Ovary (tissue), 10 donors: ENCODE measurements at regions of chr9 and their contacts with region 1.

Region 1: DNA sequence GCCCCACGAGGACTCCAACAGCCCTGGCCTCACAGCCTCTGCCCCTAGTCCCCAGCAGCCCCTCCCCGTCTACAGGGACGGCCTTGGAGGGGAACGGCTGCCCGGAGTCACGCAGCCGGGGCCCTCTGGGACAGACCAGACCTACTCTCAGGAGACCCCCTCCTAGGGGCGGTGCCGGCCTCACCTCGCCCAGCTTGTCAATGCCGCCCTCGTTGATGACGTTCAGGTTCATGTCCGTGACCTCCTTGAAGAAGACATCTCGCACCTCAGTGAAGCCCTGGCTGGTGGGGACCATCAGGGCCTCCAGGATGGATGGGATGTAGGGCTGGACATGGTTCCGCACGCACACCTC is 58.6 kb downstream of the LRSAM1 start:
- DNase-seq: peak in 2 of 5 donors; percentile 41 to 61
- H3K4me3 ChIP-seq: no peak overlapping the region
- H3K27ac ChIP-seq: peak overlapping the region; percentile 59 to 85
- H3K4me1 ChIP-seq: peaks cover 7% of the 10 kb centered on the region
- H3K27me3 ChIP-seq: no peaks in the 10 kb centered on the region
- CTCF ChIP-seq: no peak
- EP300 ChIP-seq: no peak
- POLR2A ChIP-seq: no peak

Region 2: DNA sequence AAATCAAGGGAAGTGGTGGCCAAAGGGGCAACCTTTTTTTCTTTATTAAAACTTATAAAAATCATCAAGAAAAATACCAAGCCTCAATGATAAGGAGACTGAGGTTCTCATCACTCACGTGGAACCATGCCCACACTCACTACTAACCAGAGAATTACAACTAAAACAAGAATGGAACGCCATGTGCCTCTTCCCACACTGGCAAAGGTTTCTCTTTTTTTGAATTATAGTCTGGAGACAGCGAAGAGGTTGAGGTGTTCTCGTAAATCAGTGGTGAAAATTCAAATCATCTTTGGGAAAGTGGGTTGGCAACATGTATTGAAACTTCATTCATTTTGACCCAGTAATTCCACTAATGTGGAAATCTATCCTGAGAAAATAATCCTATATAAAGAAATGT is 312.2 kb after region 1 on chr9:
- intact Hi-C with region 1: loop called in 1 of 4 experiments (anchors 5 kb)
- DNase-seq: no peak
- H3K4me3 ChIP-seq: no peak overlapping the region
- H3K27ac ChIP-seq: no peak overlapping the region
- H3K4me1 ChIP-seq: peaks cover 10% of the 10 kb centered on the region
- H3K27me3 ChIP-seq: no peaks in the 10 kb centered on the region
- CTCF ChIP-seq: no peak
- EP300 ChIP-seq: peak; percentile 10
- POLR2A ChIP-seq: no peak